ENCODE measurements at regions of chr3 and their contacts with region 1.

Region 1: DNA sequence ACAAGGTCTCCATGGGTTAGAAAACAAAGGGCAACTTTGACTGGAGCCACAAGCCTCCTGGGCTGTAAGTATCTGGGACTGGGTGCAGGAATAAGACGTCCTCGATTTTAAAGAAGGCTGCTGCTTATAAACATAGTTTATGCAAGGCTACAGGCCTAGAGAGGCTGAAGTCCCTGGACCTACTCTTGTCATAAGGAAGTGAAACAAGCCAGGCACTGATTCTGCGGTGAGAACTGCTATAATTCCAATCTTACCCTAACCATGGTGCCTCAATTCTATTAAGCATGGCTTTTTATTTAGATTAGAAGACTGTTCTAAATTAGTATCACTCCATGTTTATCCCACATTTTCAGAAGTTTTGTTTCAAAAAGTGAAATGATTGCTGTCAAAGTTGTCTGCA is 777.6 kb downstream of the PLOD2 start:
- DNase-seq: no peak
- H3K4me3 ChIP-seq: no peak overlapping the region
- H3K27ac ChIP-seq: no peak overlapping the region
- H3K4me1 ChIP-seq: no peaks in the 10 kb centered on the region
- H3K27me3 ChIP-seq: no peaks in the 10 kb centered on the region
- CTCF ChIP-seq: no peak

Region 2: DNA sequence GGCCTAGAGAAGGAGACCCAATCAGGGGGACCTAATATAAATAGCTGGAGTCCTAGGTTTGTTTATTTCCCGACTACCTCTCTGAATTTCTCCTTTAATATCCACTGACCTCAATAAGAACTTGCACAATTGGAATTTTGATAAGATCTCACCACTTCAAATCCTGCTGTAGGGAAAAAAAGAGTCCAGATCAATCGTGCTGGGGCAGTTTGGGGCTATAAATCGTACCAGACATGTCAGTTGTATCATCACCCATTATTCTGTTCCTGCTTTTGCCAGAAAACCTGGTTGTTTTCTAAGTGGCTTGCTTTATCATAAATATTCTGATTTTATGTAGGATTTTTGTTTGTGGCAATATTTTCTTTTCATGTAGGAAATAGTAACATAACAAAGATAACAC is 1130.5 kb before region 1 on chr3:
- CTCF ChIA-PET with region 1: no interaction called
- POLR2A ChIA-PET with region 1: no interaction called
- intact Hi-C with region 1: loop called (anchors 5 kb)
- DNase-seq: no peak
- H3K4me3 ChIP-seq: no peak overlapping the region
- H3K27ac ChIP-seq: no peak overlapping the region
- H3K4me1 ChIP-seq: no peaks in the 10 kb centered on the region
- H3K27me3 ChIP-seq: no peaks in the 10 kb centered on the region
- CTCF ChIP-seq: no peak

Measured in PC-9 (cell line).